Activated CD4-positive, alpha-beta memory T cell treated with anti-CD3 and anti-CD28 coated beads for 36 hours (primary cell): ENCODE measurements at regions of chr11 and their contacts with region 1.

Region 1: GRCh38 chr11:63478896-63479295 is 12.1 kb downstream of the PLAAT5 start:
- DNase-seq: peak; percentile 58
- H3K4me3 Mint-ChIP-seq: no peak overlapping the region
- H3K27ac Mint-ChIP-seq: no peak overlapping the region
- H3K4me1 Mint-ChIP-seq: no peaks in the 10 kb centered on the region
- H3K27me3 Mint-ChIP-seq: peaks cover 2% of the 10 kb centered on the region

Region 2: DNA sequence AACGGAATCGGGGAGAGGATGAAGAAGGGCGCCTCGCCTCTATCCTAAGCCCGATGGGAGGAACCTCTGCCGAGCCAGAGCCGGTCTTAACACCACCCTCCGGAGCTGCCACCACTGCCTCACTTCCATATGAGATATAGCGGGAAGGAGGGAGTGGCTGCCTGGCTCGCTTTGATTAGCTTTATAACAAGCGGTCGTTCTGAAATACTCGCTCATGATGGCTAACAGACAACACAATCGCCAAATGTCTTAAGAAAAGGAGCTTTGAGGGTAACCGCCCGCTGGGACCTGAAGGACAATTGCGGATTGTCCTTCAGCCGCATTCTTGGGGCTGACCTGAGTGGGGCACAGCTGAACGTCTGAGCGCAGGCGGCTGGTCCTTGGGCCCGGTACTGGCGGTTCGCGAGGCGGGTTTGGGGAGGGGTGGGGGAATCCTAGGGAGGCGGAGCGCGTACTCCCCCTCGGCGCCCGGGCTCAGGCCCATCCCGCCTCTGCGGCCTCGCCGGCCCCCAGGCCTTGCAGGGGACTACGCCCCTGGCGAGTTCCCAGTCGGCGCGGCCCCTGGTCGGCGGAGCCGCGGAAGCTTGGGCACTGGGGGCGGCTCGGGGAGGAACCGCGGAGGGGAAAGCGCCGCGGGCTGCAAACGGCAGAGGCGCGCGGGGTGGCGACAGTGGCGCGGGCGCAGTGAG is 11.8 kb after region 1 on chr11 and contains the start of gene PLAAT5:
- CTCF ChIA-PET with region 1: interaction called, 33 read pairs
- POLR2A ChIA-PET with region 1: no interaction called
- intact Hi-C with region 1: no loop called
- DNase-seq: peak; percentile 33
- H3K4me3 Mint-ChIP-seq: peak within 1 kb of the TSS; percentile 69
- H3K27ac Mint-ChIP-seq: peak within 1 kb of the TSS; percentile 40
- H3K4me1 Mint-ChIP-seq: peaks cover 17% of the 10 kb centered on the region
- H3K27me3 Mint-ChIP-seq: peaks cover 16% of the 10 kb centered on the region
- total RNA-seq, gene PLAAT5: 0.15 to 0.24 TPM

Region 3: GRCh38 chr11:63567044-63567840 is 88.3 kb after region 1 on chr11:
- CTCF ChIA-PET with region 1: interaction called, 11 read pairs
- POLR2A ChIA-PET with region 1: no interaction called
- intact Hi-C with region 1: no loop called
- DNase-seq: peak; percentile 75
- H3K4me3 Mint-ChIP-seq: peak overlapping the region; percentile 52
- H3K27ac Mint-ChIP-seq: peak overlapping the region; percentile 86
- H3K4me1 Mint-ChIP-seq: peaks cover 53% of the 10 kb centered on the region
- H3K27me3 Mint-ChIP-seq: no peaks in the 10 kb centered on the region

Region 4: GRCh38 chr11:63629426-63629825 is 150.5 kb after region 1 on chr11:
- CTCF ChIA-PET with region 1: interaction called, 19 read pairs
- POLR2A ChIA-PET with region 1: no interaction called
- intact Hi-C with region 1: no loop called
- DNase-seq: no peak
- H3K4me3 Mint-ChIP-seq: no peak overlapping the region
- H3K27ac Mint-ChIP-seq: no peak overlapping the region
- H3K4me1 Mint-ChIP-seq: peaks cover 16% of the 10 kb centered on the region
- H3K27me3 Mint-ChIP-seq: no peaks in the 10 kb centered on the region

Region 5: GRCh38 chr11:63738720-63739360 is 259.9 kb after region 1 on chr11:
- CTCF ChIA-PET with region 1: interaction called, 34 read pairs
- POLR2A ChIA-PET with region 1: no interaction called
- intact Hi-C with region 1: loop called (anchors 5 kb)
- DNase-seq: peak; percentile 73
- H3K4me3 Mint-ChIP-seq: no peak overlapping the region
- H3K27ac Mint-ChIP-seq: no peak overlapping the region
- H3K4me1 Mint-ChIP-seq: peaks cover 2% of the 10 kb centered on the region
- H3K27me3 Mint-ChIP-seq: no peaks in the 10 kb centered on the region